Transverse colon (tissue), 4 donors: ENCODE measurements at regions of chr16 and their contacts with region 1.

Region 1: DNA sequence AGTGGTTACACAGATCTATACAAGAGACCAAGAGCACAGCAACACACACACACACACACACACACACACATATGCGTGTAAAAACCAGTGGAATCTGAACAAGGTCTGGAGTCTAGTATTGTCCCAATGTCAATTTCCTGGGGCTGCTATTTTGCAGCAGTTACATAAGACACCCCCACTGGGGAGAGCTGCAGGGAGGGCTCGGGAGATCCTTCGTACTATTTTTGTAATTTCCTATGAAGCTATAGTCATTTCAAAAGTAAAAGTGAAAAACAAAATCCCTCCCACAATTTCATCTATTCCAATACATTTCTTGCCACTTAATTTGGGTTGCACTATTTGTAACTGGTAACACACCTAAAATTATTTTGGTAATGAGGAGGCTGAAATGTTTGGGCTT is 68.5 kb downstream of the C16orf95 start:
- DNase-seq: no peak
- H3K4me3 ChIP-seq: no peak overlapping the region
- H3K27ac ChIP-seq: no peak overlapping the region
- H3K4me1 ChIP-seq: no peaks in the 10 kb centered on the region
- H3K27me3 ChIP-seq: no peaks in the 10 kb centered on the region
- CTCF ChIP-seq: no peak
- EP300 ChIP-seq: no peak
- POLR2A ChIP-seq: no peak

Region 2: GRCh38 chr16:86100205-86101136 is 1148.2 kb before region 1 on chr16:
- in situ Hi-C with region 1: no loop called
- intact Hi-C with region 1: no loop called
- DNase-seq: no peak
- H3K4me3 ChIP-seq: no peak overlapping the region
- H3K27ac ChIP-seq: peak overlapping the region in 3 of 4 donors; percentile 10 to 26 (median 19)
- H3K4me1 ChIP-seq: peaks cover 0 to 18% (median 6%) of the 10 kb centered on the region in 4 donors
- H3K27me3 ChIP-seq: no peaks in the 10 kb centered on the region
- CTCF ChIP-seq: no peak
- EP300 ChIP-seq: no peak
- POLR2A ChIP-seq: no peak

Region 3: GRCh38 chr16:87223656-87224248 is 25.0 kb before region 1 on chr16:
- in situ Hi-C with region 1: no loop called
- intact Hi-C with region 1: loop called (anchors 2 kb)
- DNase-seq: no peak
- H3K4me3 ChIP-seq: no peak overlapping the region
- H3K27ac ChIP-seq: no peak overlapping the region
- H3K4me1 ChIP-seq: no peaks in the 10 kb centered on the region
- H3K27me3 ChIP-seq: no peaks in the 10 kb centered on the region
- CTCF ChIP-seq: no peak
- EP300 ChIP-seq: no peak
- POLR2A ChIP-seq: no peak